ENCODE measurements at regions of chr2 and their contacts with region 1.

Region 1: DNA sequence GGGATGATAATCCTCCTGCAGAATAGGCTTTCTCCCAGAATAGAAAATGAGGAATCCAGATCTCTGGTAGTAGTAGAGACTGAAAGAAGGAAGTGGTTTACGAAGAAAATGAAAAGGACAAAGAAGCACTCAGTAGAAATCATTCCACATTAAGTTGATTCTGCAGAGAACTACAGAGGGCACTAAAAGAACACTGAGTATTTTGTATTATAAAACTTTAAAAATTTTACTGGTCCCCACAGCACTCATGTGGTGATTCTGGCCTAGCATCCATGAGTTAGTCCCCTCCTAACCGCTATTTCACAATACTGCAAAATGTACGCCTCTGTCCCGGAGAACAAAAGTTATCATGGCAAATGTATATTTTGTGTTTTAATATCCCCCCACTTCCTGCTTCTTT is 42.9 kb upstream of the SLC35F5 start:
- DNase-seq: no peak
- ATAC-seq: no peak
- H3K4me3 ChIP-seq: no peak overlapping the region
- H3K4me3 Mint-ChIP-seq: no peak overlapping the region
- H3K27ac ChIP-seq: no peak overlapping the region
- H3K27ac Mint-ChIP-seq: no peak overlapping the region
- H3K4me1 ChIP-seq: peaks cover 0 to 4% of the 10 kb centered on the region in 2 donors
- H3K4me1 Mint-ChIP-seq: peaks cover 3% of the 10 kb centered on the region
- H3K27me3 ChIP-seq: no peaks in the 10 kb centered on the region
- H3K27me3 Mint-ChIP-seq: no peaks in the 10 kb centered on the region
- CTCF ChIP-seq: no peak

Region 2: GRCh38 chr2:113768770-113769169 is 30.6 kb before region 1 on chr2:
- CTCF ChIA-PET with region 1: no interaction called
- POLR2A ChIA-PET with region 1: no interaction called
- intact Hi-C with region 1: loop called (anchors 5 kb)
- DNase-seq: no peak
- ATAC-seq: no peak
- H3K4me3 ChIP-seq: no peak overlapping the region
- H3K4me3 Mint-ChIP-seq: no peak overlapping the region
- H3K27ac ChIP-seq: no peak overlapping the region
- H3K27ac Mint-ChIP-seq: no peak overlapping the region
- H3K4me1 ChIP-seq: no peaks in the 10 kb centered on the region
- H3K4me1 Mint-ChIP-seq: no peaks in the 10 kb centered on the region
- H3K27me3 ChIP-seq: no peaks in the 10 kb centered on the region
- H3K27me3 Mint-ChIP-seq: no peaks in the 10 kb centered on the region
- CTCF ChIP-seq: no peak